ENCODE measurements at regions of chr4 and their contacts with region 1.

Region 1: GRCh38 chr4:113979148-113979904 is at the start of gene ARSJ:
- DNase-seq: peak; percentile 65
- H3K4me3 ChIP-seq: peak within 1 kb of the TSS; percentile 83
- H3K27ac ChIP-seq: peak within 1 kb of the TSS; percentile 93
- H3K27me3 ChIP-seq: no peaks in the 10 kb centered on the region
- CTCF ChIP-seq: peak; percentile 27; the same call in 1 of the 2 replicates
- polyA plus RNA-seq, gene ARSJ: 43.8 and 47.9 TPM in 2 replicates

Region 2: GRCh38 chr4:113823291-113823659 is 156.1 kb before region 1 on chr4:
- CTCF ChIA-PET with region 1: no interaction called
- POLR2A ChIA-PET with region 1: no interaction called
- DNase-seq: no peak
- H3K4me3 ChIP-seq: no peak overlapping the region
- H3K27ac ChIP-seq: no peak overlapping the region
- H3K27me3 ChIP-seq: no peaks in the 10 kb centered on the region
- CTCF ChIP-seq: no peak

Region 3: GRCh38 chr4:113958766-113959538 is 20.4 kb before region 1 on chr4:
- CTCF ChIA-PET with region 1: interaction called, 7 read pairs
- POLR2A ChIA-PET with region 1: interaction called, 18 read pairs
- DNase-seq: peak; percentile 85
- H3K4me3 ChIP-seq: peak overlapping the region; percentile 0; the same call in 1 of the 2 replicates
- H3K27ac ChIP-seq: peak overlapping the region; percentile 89
- H3K27me3 ChIP-seq: no peaks in the 10 kb centered on the region
- CTCF ChIP-seq: no peak

Region 4: GRCh38 chr4:114025176-114025777 is 46.0 kb after region 1 on chr4:
- CTCF ChIA-PET with region 1: no interaction called
- POLR2A ChIA-PET with region 1: no interaction called
- DNase-seq: no peak
- H3K4me3 ChIP-seq: no peak overlapping the region
- H3K27ac ChIP-seq: no peak overlapping the region
- H3K27me3 ChIP-seq: no peaks in the 10 kb centered on the region
- CTCF ChIP-seq: no peak

Region 5: DNA sequence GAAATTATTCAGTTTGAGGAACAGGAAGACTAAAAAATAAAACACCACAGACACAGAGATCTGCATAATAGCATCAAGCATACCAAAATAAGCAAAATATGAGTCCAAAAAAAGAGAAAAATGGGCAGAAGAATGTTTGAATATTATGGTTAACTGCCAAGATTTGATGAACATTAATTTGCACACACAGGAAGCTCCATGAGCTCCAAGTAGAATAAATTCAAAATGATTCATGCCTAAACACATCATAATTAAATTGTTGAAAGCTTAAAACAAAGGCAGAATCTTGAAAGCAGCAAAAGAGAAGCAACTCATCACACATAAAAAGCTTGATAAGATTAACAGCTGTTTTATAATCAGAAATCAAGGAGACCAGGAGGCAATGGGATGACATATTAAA is 156.7 kb after region 1 on chr4:
- CTCF ChIA-PET with region 1: no interaction called
- POLR2A ChIA-PET with region 1: no interaction called
- DNase-seq: no peak
- H3K4me3 ChIP-seq: no peak overlapping the region
- H3K27ac ChIP-seq: no peak overlapping the region
- H3K27me3 ChIP-seq: no peaks in the 10 kb centered on the region
- CTCF ChIP-seq: no peak

Region 6: GRCh38 chr4:114378306-114378903 is 399.1 kb after region 1 on chr4:
- CTCF ChIA-PET with region 1: interaction called, 11 read pairs
- POLR2A ChIA-PET with region 1: no interaction called
- DNase-seq: peak; percentile 15
- H3K4me3 ChIP-seq: no peak overlapping the region
- H3K27ac ChIP-seq: no peak overlapping the region
- H3K27me3 ChIP-seq: no peaks in the 10 kb centered on the region
- CTCF ChIP-seq: peak; percentile 73